IMR-90 (cell line): ENCODE measurements at regions of chr2 and their contacts with region 1.

Region 1: DNA sequence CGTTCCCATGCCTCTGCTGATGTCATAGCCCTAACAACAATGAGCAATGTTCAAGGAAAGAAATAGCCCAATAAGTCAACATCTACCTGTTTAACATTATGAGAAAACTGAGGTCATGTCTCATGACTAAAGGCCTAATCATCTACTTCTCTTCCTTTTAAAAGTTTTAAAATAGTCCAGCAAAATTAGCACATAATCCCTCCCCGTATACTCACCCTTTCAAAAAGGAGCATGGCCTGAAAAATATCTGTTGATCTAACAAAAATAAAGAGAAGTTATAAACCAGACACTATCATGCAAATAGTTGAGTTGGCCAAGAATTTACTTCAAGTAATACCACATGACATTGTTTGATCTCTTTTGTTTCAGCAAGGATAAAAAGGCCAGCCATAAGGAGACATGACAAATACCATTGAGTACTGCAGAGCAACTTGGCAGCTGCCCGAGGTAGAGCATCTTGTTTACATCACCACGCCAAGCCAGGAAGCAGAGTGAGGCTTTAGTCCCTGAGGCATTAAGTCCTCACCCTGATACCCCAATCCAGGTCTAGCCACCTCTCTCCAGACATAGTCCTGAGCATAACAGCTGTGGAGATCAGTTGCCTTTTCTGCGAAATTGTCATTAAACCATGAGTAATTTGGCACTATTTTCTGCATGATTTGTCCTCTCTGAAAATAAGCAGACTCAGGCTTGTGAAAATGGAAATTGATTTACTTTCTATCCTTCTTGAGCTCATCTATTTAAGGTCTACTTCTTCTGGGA is 137.4 kb upstream of the ETAA1 start:
- DNase-seq: peak; percentile 94
- ATAC-seq: peak; percentile 19
- H3K4me3 ChIP-seq: no peak overlapping the region
- H3K27ac ChIP-seq: peak overlapping the region; percentile 63
- H3K4me1 ChIP-seq: peaks cover 20% of the 10 kb centered on the region
- H3K27me3 ChIP-seq: no peaks in the 10 kb centered on the region
- CTCF ChIP-seq: no peak
- POLR2A ChIP-seq: peak; percentile 91
- RAD21 ChIP-seq: no peak

Region 2: DNA sequence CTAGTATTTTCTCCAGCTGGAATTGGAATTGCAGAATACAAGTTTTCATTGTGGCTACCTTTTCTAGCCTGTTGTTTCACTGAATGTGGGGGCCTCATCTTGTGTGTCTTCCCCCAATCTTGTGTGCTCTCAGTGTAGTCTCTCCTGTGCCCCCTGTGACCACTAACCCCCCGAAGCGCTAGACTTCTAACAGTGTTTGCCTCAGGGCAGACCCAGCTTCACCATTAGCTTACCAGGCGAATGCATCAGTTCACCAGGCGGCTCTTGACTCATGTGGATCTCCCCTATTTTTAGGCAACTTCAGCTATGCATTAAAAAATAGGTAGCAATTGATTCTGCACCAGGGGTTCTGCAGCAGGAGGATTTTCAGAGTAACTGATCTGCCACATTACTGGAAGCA is 1201.1 kb before region 1 on chr2:
- CTCF ChIA-PET with region 1: no interaction called
- POLR2A ChIA-PET with region 1: no interaction called
- dilution Hi-C with region 1: no loop called
- in situ Hi-C with region 1: no loop called
- intact Hi-C with region 1: no loop called
- DNase-seq: no peak
- ATAC-seq: no peak
- H3K4me3 ChIP-seq: no peak overlapping the region
- H3K27ac ChIP-seq: no peak overlapping the region
- H3K4me1 ChIP-seq: no peaks in the 10 kb centered on the region
- H3K27me3 ChIP-seq: no peaks in the 10 kb centered on the region; the same call in 1 of the 2 replicates
- CTCF ChIP-seq: no peak
- POLR2A ChIP-seq: no peak
- RAD21 ChIP-seq: no peak

Region 3: GRCh38 chr2:67137699-67138098 is 122.1 kb before region 1 on chr2:
- CTCF ChIA-PET with region 1: no interaction called
- POLR2A ChIA-PET with region 1: no interaction called
- dilution Hi-C with region 1: no loop called
- in situ Hi-C with region 1: no loop called
- intact Hi-C with region 1: no loop called
- DNase-seq: no peak
- ATAC-seq: no peak
- H3K4me3 ChIP-seq: no peak overlapping the region
- H3K27ac ChIP-seq: no peak overlapping the region
- H3K4me1 ChIP-seq: no peaks in the 10 kb centered on the region
- H3K27me3 ChIP-seq: no peaks in the 10 kb centered on the region
- CTCF ChIP-seq: no peak
- POLR2A ChIP-seq: no peak
- RAD21 ChIP-seq: no peak

Region 4: GRCh38 chr2:67290451-67291290 is 30.9 kb after region 1 on chr2:
- CTCF ChIA-PET with region 1: no interaction called
- POLR2A ChIA-PET with region 1: no interaction called
- dilution Hi-C with region 1: no loop called
- in situ Hi-C with region 1: no loop called
- intact Hi-C with region 1: loop called (anchors 2 kb)
- DNase-seq: peak; percentile 93
- ATAC-seq: peak; percentile 78
- H3K4me3 ChIP-seq: peak overlapping the region; percentile 11; the same call in 1 of the 2 replicates
- H3K27ac ChIP-seq: peak overlapping the region; percentile 91
- H3K4me1 ChIP-seq: peaks cover 12% of the 10 kb centered on the region
- H3K27me3 ChIP-seq: no peaks in the 10 kb centered on the region
- CTCF ChIP-seq: no peak
- POLR2A ChIP-seq: no peak
- RAD21 ChIP-seq: no peak

Region 5: GRCh38 chr2:67397143-67397986 is 137.6 kb after region 1 on chr2 and contains the start of gene ETAA1:
- CTCF ChIA-PET with region 1: no interaction called
- POLR2A ChIA-PET with region 1: interaction called, 6 read pairs
- dilution Hi-C with region 1: no loop called
- in situ Hi-C with region 1: no loop called
- intact Hi-C with region 1: loop called (anchors 1 kb)
- DNase-seq: peak; percentile 90
- ATAC-seq: peak; percentile 96
- H3K4me3 ChIP-seq: peak within 1 kb of the TSS; percentile 87
- H3K27ac ChIP-seq: peak within 1 kb of the TSS; percentile 96
- H3K4me1 ChIP-seq: peaks cover 9% of the 10 kb centered on the region
- H3K27me3 ChIP-seq: no peaks in the 10 kb centered on the region
- CTCF ChIP-seq: no peak
- POLR2A ChIP-seq: peak; percentile 83
- RAD21 ChIP-seq: peak; percentile 25
- total RNA-seq, gene ETAA1: 8.1 and 19.2 TPM in 2 replicates